ENCODE measurements at regions of chr3 and their contacts with region 1.

Region 1: GRCh38 chr3:46488735-46489361 is 8.9 kb upstream of the RTP3 start:
- DNase-seq: peak; percentile 78 to 96 (median 90)
- ATAC-seq: peak; percentile 95 to 98 (median 96)
- H3K4me3 ChIP-seq: peak overlapping the region; percentile 35 to 52
- H3K4me3 Mint-ChIP-seq: peak overlapping the region; percentile 37 to 68 (median 51)
- H3K27ac ChIP-seq: no peak overlapping the region
- H3K27ac Mint-ChIP-seq: peak overlapping the region; percentile 75 to 85
- H3K4me1 ChIP-seq: peaks cover 11 to 16% of the 10 kb centered on the region in 2 experiments
- H3K4me1 Mint-ChIP-seq: peaks cover 19 to 26% (median 19%) of the 10 kb centered on the region in 3 donors
- H3K27me3 ChIP-seq: peaks cover 0 to 9% of the 10 kb centered on the region in 2 experiments
- H3K27me3 Mint-ChIP-seq: no peaks in the 10 kb centered on the region

Region 2: GRCh38 chr3:46538803-46539442 is 50.1 kb after region 1 on chr3:
- CTCF ChIA-PET with region 1: interaction called, 3 to 48 read pairs
- POLR2A ChIA-PET with region 1: no interaction called
- DNase-seq: peak; percentile 68 to 93 (median 86)
- ATAC-seq: peak; percentile 95 to 96 (median 95)
- H3K4me3 ChIP-seq: peak overlapping the region; percentile 17 to 59
- H3K4me3 Mint-ChIP-seq: peak overlapping the region; percentile 60 to 62 (median 62)
- H3K27ac ChIP-seq: peak overlapping the region; percentile 66
- H3K27ac Mint-ChIP-seq: peak overlapping the region; percentile 90 to 91
- H3K4me1 ChIP-seq: peaks cover 38 to 44% of the 10 kb centered on the region in 2 experiments
- H3K4me1 Mint-ChIP-seq: peaks cover 57 to 82% (median 70%) of the 10 kb centered on the region in 3 donors
- H3K27me3 ChIP-seq: no peaks in the 10 kb centered on the region
- H3K27me3 Mint-ChIP-seq: no peaks in the 10 kb centered on the region

Region 3: GRCh38 chr3:46558184-46559043 is 69.6 kb after region 1 on chr3:
- CTCF ChIA-PET with region 1: interaction called, 30 to 42 read pairs
- POLR2A ChIA-PET with region 1: no interaction called
- DNase-seq: peak; percentile 43 to 87 (median 63)
- ATAC-seq: peak; percentile 98 to 99 (median 98)
- H3K4me3 ChIP-seq: peak overlapping the region; percentile 46 to 80
- H3K4me3 Mint-ChIP-seq: peak overlapping the region; percentile 63 to 78 (median 76)
- H3K27ac ChIP-seq: no peak overlapping the region
- H3K27ac Mint-ChIP-seq: peak overlapping the region; percentile 66 to 74
- H3K4me1 ChIP-seq: peaks cover 6 to 12% of the 10 kb centered on the region in 2 experiments
- H3K4me1 Mint-ChIP-seq: peaks cover 11 to 24% (median 24%) of the 10 kb centered on the region in 3 donors
- H3K27me3 ChIP-seq: peaks cover 0 to 9% of the 10 kb centered on the region in 2 experiments
- H3K27me3 Mint-ChIP-seq: no peaks in the 10 kb centered on the region

Region 4: DNA sequence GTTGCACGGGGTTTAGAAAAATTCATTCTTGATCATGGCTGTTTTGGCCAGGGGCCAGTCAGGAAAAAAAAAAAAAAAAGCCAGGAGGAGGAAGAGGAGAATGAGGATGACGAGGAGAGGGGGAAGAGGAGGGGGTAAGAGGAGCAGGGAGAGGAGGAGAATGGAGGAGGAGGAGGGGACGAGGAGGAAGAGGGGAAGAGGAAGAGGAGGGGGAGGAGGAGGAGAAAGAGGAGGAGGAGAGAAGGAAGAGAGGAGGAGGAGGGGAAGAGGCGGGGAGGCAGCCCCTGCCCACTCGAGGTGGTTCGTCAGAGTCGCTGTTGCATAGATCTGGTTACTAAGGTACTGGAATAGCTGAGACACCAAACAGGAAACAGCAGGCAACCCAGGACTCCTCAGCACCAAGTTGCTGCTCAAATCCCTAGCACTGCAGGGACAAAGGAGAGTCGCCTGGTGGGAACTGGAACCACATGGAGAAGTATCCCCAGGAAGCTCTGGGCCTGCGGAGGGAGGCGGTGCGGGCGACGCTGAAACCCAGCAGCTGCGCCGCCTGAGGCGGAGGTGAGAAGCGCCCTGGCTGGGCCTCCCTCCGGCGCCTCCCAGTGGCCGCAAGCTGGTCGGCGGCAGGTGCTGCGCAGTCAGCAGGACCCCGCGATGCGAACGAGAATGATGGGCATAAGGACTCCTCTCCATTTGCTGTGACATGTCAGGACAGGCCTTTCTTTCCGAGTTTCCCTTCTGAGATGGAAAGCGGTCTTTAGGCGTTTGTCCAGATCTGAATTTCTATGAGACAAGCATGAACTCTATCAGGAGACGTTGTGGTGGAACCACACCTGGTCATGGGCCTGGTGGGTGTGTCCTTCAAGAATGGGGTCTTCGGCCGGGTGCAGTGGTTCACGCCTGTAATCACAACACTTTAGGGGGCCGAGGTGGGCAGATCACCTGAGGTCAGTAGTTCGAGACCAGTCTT is 141.0 kb after region 1 on chr3:
- CTCF ChIA-PET with region 1: interaction called, 12 to 54 read pairs
- POLR2A ChIA-PET with region 1: interaction called in 1 of 2 experiments, 4 read pairs
- DNase-seq: peak; percentile 52 to 87 (median 72)
- ATAC-seq: peak; percentile 97 to 99 (median 98)
- H3K4me3 ChIP-seq: peak overlapping the region; percentile 37 to 70
- H3K4me3 Mint-ChIP-seq: peak overlapping the region; percentile 45 to 72 (median 57)
- H3K27ac ChIP-seq: no peak overlapping the region
- H3K27ac Mint-ChIP-seq: peak overlapping the region; percentile 69 to 84
- H3K4me1 ChIP-seq: peaks cover 21 to 27% of the 10 kb centered on the region in 2 experiments
- H3K4me1 Mint-ChIP-seq: peaks cover 24 to 27% (median 24%) of the 10 kb centered on the region in 3 donors
- H3K27me3 ChIP-seq: peaks cover 0 to 4% of the 10 kb centered on the region in 2 experiments
- H3K27me3 Mint-ChIP-seq: no peaks in the 10 kb centered on the region